Right ventricle myocardium inferior (tissue), 1 donor: ENCODE measurements at regions of chr10 and their contacts with region 1.

Region 1: DNA sequence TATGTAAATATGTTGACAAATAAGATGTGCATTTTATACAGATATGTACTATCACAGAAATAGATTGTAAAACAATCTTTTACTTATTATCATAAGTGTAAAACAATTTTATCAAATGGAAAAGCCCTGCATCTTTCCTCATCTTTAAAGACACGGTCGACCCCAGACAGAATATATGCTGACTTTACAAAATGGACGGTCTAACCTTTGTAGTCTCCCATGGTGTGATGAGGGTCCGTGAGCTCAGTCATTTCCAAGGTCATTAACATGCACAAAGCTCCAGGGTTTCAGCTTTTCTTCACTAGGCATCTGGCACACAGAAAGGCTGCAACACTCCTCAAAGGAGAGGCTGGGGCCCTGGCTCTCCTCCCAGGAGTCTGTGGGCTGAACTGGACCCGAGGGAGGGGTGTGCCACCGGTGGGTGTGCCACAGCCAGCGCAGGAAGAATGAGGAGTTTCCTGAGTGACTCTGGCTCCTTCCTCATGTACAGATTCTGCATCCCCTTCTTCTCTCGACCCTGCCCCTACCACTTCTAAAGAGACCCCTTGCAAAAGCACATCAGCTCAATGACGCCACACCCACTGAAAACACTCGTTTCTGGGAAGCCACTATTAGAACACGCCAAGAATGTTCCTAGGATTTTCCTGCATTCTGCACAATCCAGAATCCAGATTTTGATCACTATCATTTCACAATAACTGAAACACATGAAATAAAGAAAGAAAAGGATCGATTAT is 26.2 kb upstream of the ABLIM1 start:
- DNase-seq: peak; percentile 74
- ATAC-seq: peak; percentile 43

Region 2: DNA sequence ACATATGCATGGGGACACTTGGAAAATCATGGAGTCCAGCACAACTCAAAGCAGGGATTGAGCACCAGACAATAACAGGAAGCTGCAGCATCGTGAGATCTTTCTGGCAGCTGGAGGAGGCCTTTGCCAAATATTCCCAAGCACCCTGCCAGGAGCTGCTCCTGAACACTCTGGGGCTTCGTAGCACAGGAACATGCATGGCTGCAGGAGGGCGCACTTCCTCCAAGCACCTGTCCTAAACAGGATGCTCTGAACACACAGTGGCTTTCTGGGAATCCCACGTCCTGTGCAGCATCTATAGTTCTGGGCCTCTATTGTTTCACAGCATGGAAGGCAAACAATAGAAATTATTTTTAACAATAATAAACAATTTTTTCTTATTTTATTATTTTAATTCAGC is 30.3 kb before region 1 on chr10:
- intact Hi-C with region 1: loop called (anchors 2 kb)
- DNase-seq: no peak
- ATAC-seq: peak; percentile 33